ENCODE measurements at regions of chr6 and their contacts with region 1.

Region 1: GRCh38 chr6:99467509-99468106 is 42.5 kb upstream of the PNISR start:
- DNase-seq: no peak
- H3K4me3 Mint-ChIP-seq: no peak overlapping the region
- H3K27ac Mint-ChIP-seq: no peak overlapping the region
- H3K4me1 Mint-ChIP-seq: no peaks in the 10 kb centered on the region
- H3K27me3 Mint-ChIP-seq: no peaks in the 10 kb centered on the region
- CTCF ChIP-seq: peak; percentile 61

Region 2: DNA sequence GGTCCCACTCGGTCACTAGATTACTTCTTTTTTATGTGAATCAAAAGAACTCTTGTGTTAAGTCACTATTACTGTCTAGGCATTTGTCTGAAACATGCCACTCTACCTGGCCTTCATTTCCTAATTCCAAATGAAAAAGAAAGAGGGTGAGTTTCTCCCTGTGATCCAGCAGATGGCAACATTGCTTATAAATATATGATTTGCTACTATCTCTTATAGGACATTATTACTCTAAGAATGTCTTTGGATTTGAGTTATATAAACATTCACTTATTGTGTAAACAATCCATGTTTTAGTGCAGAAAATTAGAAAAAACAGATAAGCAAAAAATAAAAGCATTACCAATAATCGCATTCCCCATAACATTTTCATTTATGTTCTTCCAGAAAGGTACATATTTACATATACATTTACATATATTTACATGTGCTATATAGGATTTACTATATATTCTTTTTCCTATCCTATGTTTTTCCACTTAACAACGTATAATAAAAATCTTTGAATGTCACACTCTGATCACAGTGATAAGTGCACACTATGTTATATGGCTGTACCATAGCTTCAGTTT is 185.0 kb before region 1 on chr6:
- CTCF ChIA-PET with region 1: no interaction called
- intact Hi-C with region 1: no loop called
- DNase-seq: no peak
- H3K4me3 Mint-ChIP-seq: no peak overlapping the region
- H3K27ac Mint-ChIP-seq: no peak overlapping the region
- H3K4me1 Mint-ChIP-seq: no peaks in the 10 kb centered on the region
- H3K27me3 Mint-ChIP-seq: peaks cover 21% of the 10 kb centered on the region
- CTCF ChIP-seq: no peak

Region 3: DNA sequence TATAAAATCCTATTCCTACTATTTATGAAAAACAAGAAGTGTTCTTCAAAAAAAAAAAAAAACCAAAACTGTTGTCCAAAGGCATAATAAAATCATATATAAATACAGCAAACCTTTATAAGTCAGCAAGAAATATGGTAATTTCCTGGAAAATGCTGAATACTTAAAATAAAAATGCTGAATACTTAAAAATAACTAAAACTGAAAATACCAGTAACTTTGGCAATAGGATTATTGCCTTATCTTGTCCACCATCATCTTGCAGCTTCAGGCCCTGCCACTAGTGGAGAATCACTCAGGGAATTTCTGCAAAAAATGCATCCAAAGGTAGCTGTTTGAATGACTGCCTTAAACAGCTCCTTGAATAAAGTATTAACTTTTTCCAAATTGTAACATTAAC is 76.4 kb after region 1 on chr6:
- CTCF ChIA-PET with region 1: no interaction called
- intact Hi-C with region 1: no loop called
- DNase-seq: no peak
- H3K4me3 Mint-ChIP-seq: no peak overlapping the region
- H3K27ac Mint-ChIP-seq: no peak overlapping the region
- H3K4me1 Mint-ChIP-seq: peaks cover 12% of the 10 kb centered on the region
- H3K27me3 Mint-ChIP-seq: no peaks in the 10 kb centered on the region
- CTCF ChIP-seq: no peak

Region 4: GRCh38 chr6:99905209-99906106 is 437.9 kb after region 1 on chr6:
- CTCF ChIA-PET with region 1: no interaction called
- intact Hi-C with region 1: loop called (anchors 2 kb)
- DNase-seq: peak; percentile 40
- H3K4me3 Mint-ChIP-seq: no peak overlapping the region
- H3K27ac Mint-ChIP-seq: no peak overlapping the region
- H3K4me1 Mint-ChIP-seq: no peaks in the 10 kb centered on the region
- H3K27me3 Mint-ChIP-seq: no peaks in the 10 kb centered on the region
- CTCF ChIP-seq: peak; percentile 67

Region 5: DNA sequence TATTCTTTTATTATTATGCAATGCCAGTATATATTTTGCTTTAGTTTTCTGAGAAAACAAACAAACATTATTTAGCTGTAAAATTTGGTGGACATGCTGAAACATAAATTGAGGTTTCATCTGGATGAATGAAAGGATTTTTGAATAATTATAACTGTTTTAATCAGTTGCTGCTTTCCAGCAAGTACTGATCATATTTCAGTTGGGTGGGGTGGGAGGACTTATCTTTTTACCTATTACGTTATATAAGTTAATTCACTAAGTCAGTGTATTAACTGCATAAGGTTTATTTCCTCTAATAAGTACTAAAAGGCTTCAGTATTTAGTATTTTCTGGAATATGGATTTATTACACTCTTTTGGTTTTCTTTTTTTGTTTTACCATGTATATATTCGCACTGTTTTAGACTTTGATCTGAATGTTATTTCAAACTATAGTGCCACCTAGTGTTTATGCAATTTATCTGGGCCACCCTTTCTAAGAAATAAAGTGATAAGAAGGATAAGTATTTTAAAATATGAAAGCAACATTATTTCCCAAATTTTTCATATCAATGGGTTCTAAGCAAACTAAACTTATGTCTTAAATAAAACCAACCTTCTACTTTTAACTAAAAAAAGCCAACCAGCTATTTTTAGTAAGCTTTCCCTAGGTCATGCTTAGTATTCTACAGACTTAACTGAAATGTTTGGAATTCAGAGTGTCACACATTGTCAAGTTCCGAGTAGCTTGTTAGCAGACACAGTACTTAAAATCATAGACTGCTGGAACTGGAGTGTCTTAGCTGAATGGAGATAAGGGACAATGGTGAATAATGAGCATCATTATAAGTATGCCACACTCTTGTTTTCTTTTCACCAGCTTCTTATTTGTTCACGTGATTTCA is 631.8 kb after region 1 on chr6:
- CTCF ChIA-PET with region 1: no interaction called
- intact Hi-C with region 1: loop called (anchors 5 kb)
- DNase-seq: no peak
- H3K4me3 Mint-ChIP-seq: no peak overlapping the region
- H3K27ac Mint-ChIP-seq: no peak overlapping the region
- H3K4me1 Mint-ChIP-seq: no peaks in the 10 kb centered on the region
- H3K27me3 Mint-ChIP-seq: no peaks in the 10 kb centered on the region
- CTCF ChIP-seq: peak; percentile 49